ENCODE measurements at regions of chr11 and their contacts with region 1.

Region 1: DNA sequence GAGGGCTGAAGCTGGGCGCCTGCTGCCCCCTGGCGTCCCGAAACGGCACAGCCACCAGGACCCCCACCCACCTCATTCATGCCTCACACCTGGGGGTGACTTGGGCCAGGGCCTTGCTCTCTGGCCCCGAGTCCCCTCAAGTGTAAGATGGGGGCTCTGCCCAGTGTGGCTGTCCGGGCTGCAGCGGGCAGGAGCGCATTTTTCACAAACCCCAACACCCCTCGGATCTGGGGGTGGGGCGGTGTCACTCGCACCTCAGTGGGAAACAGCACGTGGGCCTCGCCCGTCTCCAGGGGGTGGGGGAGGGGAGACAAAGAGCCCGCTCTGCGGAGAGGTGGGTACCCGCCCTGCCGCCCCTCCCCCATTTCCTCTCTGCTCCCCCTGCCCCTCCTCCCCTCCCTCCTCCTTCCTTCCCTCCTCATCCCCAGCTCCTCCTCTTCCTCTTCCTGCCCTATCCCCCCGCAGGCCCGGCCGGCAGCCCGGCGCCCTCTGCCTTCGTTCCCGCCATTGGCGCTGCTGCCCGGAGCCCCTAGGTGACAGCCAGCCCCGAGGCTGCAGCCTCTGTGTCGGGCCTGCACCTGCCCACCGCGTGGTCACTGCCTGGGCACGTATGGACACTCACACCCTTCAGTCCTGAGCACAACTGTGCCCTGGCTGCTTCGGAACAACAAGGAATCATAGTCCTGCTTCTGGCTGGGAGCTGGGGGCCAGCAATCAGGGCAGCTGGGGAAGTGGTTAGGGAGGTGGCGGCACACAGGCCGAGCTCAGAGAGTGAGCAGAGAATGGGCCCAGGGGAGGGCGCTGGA is 6.8 kb upstream of the CDKN1C start:
- DNase-seq: peak; percentile 73
- H3K4me3 Mint-ChIP-seq: peak overlapping the region; percentile 72
- H3K27ac Mint-ChIP-seq: peak overlapping the region; percentile 84
- H3K4me1 Mint-ChIP-seq: peaks cover 15% of the 10 kb centered on the region
- H3K27me3 Mint-ChIP-seq: no peaks in the 10 kb centered on the region
- CTCF ChIP-seq: peak; percentile 86

Region 2: GRCh38 chr11:2741377-2742131 is 150.9 kb before region 1 on chr11:
- CTCF ChIA-PET with region 1: no interaction called
- intact Hi-C with region 1: no loop called
- DNase-seq: no peak
- H3K4me3 Mint-ChIP-seq: no peak overlapping the region
- H3K27ac Mint-ChIP-seq: no peak overlapping the region
- H3K4me1 Mint-ChIP-seq: peaks cover 17% of the 10 kb centered on the region
- H3K27me3 Mint-ChIP-seq: no peaks in the 10 kb centered on the region
- CTCF ChIP-seq: no peak

Region 3: GRCh38 chr11:2912498-2912897 is 20.1 kb after region 1 on chr11:
- CTCF ChIA-PET with region 1: interaction called, 11 read pairs
- intact Hi-C with region 1: no loop called
- DNase-seq: peak; percentile 98
- H3K4me3 Mint-ChIP-seq: peak overlapping the region; percentile 56
- H3K27ac Mint-ChIP-seq: peak overlapping the region; percentile 81
- H3K4me1 Mint-ChIP-seq: peaks cover 44% of the 10 kb centered on the region
- H3K27me3 Mint-ChIP-seq: no peaks in the 10 kb centered on the region
- CTCF ChIP-seq: no peak

Measured in Calu3 (cell line).